Activated CD4-positive, alpha-beta T cell treated with anti-CD3 and anti-CD28 coated beads for 36 hours (primary cell): ENCODE measurements at regions of chr22 and their contacts with region 1.

Region 1: GRCh38 chr22:49767355-49768062 is 60.2 kb downstream of the BRD1 start:
- DNase-seq: peak; percentile 51
- ATAC-seq: peak; percentile 68
- H3K4me3 Mint-ChIP-seq: no peak overlapping the region
- H3K27ac Mint-ChIP-seq: no peak overlapping the region
- H3K4me1 Mint-ChIP-seq: peaks cover 8% of the 10 kb centered on the region
- H3K27me3 Mint-ChIP-seq: no peaks in the 10 kb centered on the region

Region 2: DNA sequence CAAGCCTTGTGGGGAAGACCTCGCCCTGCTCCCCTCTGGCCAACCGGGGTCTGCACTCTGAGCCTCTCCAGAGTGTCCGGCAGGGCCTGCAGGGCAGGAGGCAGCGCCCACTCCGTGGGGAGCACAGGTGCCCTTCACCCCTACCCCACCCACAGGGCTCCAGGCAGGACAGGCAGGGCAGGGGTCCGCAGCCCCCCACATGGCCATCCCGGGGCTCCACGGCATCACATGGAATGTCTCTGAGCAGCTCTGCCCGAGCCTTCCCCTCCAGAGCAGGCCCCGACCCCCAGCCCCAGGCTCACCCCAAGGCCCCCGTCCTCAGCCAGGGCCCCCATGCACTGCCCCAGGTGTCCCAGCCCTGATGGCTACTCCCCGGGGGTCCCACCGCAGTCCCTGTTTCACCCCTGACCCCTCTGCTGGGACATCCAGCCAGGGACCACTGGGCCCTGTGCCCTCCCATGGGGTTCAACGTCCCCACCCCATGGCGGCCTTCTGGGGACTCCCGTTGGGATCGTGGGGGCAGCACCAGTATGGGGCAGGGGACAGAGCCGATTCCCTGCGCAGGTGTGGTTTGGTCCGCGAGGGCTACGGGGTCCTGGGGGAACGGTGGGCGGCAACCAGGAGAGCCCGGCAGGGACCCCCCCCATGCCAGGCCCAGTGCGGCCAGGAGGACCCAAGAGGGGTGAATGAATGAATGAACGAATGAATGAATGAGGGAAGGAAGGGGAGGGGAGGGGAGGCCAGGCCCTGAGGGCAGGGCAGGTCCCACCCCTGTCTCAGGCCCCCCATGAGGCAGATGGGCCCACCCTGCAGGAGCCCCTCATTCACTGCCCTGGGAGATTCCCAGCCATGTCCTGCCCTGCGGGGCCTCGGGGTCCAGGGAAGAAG is 17.4 kb before region 1 on chr22:
- CTCF ChIA-PET with region 1: no interaction called
- POLR2A ChIA-PET with region 1: no interaction called
- intact Hi-C with region 1: no loop called
- DNase-seq: no peak
- ATAC-seq: no peak
- H3K4me3 Mint-ChIP-seq: no peak overlapping the region
- H3K27ac Mint-ChIP-seq: no peak overlapping the region
- H3K4me1 Mint-ChIP-seq: no peaks in the 10 kb centered on the region
- H3K27me3 Mint-ChIP-seq: no peaks in the 10 kb centered on the region

Region 3: DNA sequence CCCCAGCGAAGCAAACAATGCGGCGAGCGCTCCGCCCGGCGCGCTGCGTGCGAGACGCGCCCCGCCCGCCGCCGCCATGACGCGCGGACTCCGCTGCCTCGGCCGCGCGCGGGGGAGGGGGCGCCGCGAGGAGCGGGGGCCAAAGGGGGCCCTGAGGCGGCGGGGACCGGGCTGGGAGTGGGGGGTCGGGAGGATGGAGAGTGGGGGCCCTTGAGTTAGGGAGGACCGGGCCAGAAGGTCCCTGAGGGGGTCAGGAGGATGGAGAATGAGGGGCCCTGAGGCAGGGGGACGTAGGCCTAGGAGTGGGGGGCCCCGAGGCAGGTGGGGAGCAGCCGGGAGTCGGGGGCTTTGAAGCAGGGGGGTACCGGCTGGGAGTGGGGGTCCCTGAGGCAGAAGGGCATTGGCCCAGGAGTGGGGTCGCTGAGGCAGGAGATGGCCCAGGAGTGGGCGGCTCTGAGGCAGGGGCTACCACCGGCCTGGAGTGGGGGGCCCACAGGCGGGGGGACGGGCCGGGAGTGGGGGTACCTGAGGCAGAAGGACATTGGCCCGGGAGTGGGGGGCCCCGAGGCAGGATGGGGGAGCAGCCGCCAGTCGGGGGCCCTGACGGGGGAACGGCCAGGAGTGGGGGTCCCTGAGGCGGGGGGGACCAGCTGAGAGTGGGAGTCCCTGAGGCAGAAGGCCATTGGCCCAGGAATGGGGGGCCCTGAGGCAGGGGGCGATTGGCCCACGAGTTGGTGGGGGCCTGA is 60.5 kb after region 1 on chr22 and contains the start of gene BRD1:
- CTCF ChIA-PET with region 1: no interaction called
- POLR2A ChIA-PET with region 1: interaction called, 4 read pairs
- intact Hi-C with region 1: loop called in 1 of 2 experiments (anchors 5 kb)
- DNase-seq: peak; percentile 73
- ATAC-seq: peak; percentile 68
- H3K4me3 Mint-ChIP-seq: peak within 1 kb of the TSS; percentile 88
- H3K27ac Mint-ChIP-seq: peak within 1 kb of the TSS; percentile 92
- H3K4me1 Mint-ChIP-seq: peaks cover 40% of the 10 kb centered on the region
- H3K27me3 Mint-ChIP-seq: no peaks in the 10 kb centered on the region
- total RNA-seq, gene BRD1: 22.1 to 23.6 TPM

Region 4: DNA sequence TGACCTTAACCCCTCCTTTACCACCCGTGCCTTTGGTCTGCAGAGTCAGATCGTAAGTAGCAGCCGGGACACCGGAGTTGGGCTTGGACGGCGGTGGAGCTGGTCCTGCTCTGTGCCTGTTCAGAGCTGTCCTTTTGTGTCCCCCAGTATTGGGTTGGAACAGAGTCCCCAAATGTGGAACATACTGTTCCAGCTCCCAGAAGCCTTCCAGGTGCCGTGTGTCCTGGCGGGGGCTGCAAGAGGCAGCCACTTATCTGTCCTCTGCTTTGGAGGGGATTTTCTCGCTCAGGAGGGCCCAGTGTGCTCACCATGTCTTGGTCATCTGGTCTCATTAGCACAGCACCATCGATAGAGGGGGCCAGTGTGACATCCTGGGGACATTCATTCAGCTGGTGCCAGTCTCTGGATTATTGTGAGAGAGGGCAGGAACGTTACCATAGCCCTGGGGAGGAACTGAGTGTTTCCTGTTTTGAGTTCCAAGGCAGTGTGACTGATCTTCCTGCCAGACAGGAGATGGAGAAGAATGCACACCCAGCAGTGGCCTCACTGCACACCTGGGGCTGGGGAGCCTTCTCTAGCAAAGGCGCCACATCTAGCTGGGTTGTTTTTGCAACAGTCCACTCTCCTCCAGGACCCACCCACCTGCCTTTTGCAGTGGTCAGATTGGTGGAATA is 163.4 kb after region 1 on chr22:
- CTCF ChIA-PET with region 1: interaction called, 4 read pairs
- POLR2A ChIA-PET with region 1: no interaction called
- intact Hi-C with region 1: loop called in 1 of 2 experiments (anchors 1 kb)
- DNase-seq: peak; percentile 77
- ATAC-seq: peak; percentile 47
- H3K4me3 Mint-ChIP-seq: peak overlapping the region; percentile 22
- H3K27ac Mint-ChIP-seq: peak overlapping the region; percentile 34
- H3K4me1 Mint-ChIP-seq: peaks cover 43% of the 10 kb centered on the region
- H3K27me3 Mint-ChIP-seq: no peaks in the 10 kb centered on the region

Region 5: GRCh38 chr22:49992921-49993648 is 225.6 kb after region 1 on chr22:
- CTCF ChIA-PET with region 1: no interaction called
- POLR2A ChIA-PET with region 1: no interaction called
- intact Hi-C with region 1: loop called in 1 of 2 experiments (anchors 1 kb)
- DNase-seq: peak; percentile 87
- ATAC-seq: peak; percentile 98
- H3K4me3 Mint-ChIP-seq: no peak overlapping the region
- H3K27ac Mint-ChIP-seq: peak overlapping the region; percentile 53
- H3K4me1 Mint-ChIP-seq: peaks cover 5% of the 10 kb centered on the region
- H3K27me3 Mint-ChIP-seq: no peaks in the 10 kb centered on the region

Region 6: DNA sequence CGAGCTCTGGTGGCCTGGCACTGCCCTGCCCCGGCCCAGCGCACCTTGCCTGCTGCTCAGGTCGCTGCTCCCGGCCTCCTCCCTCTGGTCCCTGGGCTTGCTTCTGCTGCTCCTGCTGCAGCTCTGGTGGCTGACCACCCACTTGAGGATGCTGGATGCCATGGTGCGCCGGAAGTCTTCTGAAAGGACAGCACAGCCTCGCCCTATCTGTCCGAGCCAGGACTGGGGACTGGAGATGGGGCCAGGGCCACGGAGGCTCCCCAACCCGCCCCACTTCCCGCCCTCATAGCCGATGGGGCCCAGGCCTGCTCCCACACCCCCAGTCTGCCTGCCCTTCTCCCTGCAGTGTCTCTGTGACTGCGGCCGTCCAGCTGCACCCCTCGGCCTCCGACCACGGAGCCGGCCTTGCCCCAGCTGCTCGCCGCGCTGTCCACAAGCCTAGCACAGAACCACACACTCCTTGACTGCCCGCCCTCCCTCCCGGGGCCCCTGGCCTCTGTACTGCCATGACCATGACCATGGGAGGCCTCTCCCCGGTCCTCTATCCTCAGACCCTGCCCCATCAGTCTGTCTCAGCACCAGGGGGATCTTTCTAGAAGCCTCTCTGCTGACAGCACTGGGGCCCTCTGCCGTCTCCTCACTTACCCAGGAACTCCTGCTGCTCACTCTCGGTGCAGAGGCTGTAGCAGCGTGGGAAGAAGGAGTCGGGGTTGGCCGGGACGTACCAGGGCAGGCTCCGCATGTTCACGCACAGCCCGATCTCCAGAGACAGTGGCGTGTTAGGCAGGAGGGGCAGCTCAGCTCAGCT is 277.9 kb after region 1 on chr22:
- CTCF ChIA-PET with region 1: no interaction called
- POLR2A ChIA-PET with region 1: no interaction called
- intact Hi-C with region 1: no loop called
- DNase-seq: no peak
- ATAC-seq: no peak
- H3K4me3 Mint-ChIP-seq: no peak overlapping the region
- H3K27ac Mint-ChIP-seq: no peak overlapping the region
- H3K4me1 Mint-ChIP-seq: peaks cover 7% of the 10 kb centered on the region
- H3K27me3 Mint-ChIP-seq: peaks cover 17% of the 10 kb centered on the region

Region 7: DNA sequence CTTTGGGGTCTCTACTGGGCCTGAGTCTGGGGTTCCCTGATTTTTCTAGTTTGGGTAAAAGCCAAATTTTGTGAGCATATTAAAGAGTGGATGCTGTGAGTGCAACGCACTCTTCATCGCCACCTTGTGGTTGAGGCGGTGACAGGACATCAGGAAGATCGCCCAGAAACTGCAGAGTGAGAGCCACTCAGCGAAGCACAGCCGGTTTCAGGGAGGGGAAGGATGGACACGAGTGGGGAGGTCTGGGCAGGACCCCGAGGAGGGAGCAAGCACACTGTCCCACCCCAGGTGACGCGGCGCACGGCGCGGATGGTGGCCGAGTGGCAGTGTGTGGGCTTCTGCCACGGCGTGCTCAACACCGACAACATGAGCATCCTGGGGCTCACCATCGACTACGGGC is 442.4 kb after region 1 on chr22:
- CTCF ChIA-PET with region 1: no interaction called
- POLR2A ChIA-PET with region 1: no interaction called
- intact Hi-C with region 1: loop called in 1 of 2 experiments (anchors 2 kb)
- DNase-seq: peak; percentile 85
- ATAC-seq: peak; percentile 86
- H3K4me3 Mint-ChIP-seq: no peak overlapping the region
- H3K27ac Mint-ChIP-seq: no peak overlapping the region
- H3K4me1 Mint-ChIP-seq: peaks cover 5% of the 10 kb centered on the region
- H3K27me3 Mint-ChIP-seq: no peaks in the 10 kb centered on the region